ENCODE measurements at regions of chr5 and their contacts with region 1.

Region 1: GRCh38 chr5:149035372-149035790 is 27.5 kb downstream of the SH3TC2 start:
- DNase-seq: peak; percentile 46 to 73
- ATAC-seq: peak; percentile 81

Region 2: GRCh38 chr5:148443998-148444397 is 591.4 kb before region 1 on chr5:
- intact Hi-C with region 1: loop called in 1 of 2 experiments (anchors 5 kb)
- DNase-seq: peak in 1 of 2 donors; percentile 22
- ATAC-seq: peak; percentile 67

Region 3: GRCh38 chr5:148739524-148739923 is 295.9 kb before region 1 on chr5:
- intact Hi-C with region 1: loop called in 1 of 2 experiments (anchors 5 kb)
- DNase-seq: no peak
- ATAC-seq: no peak

Measured in left colon (tissue), 2 donors.